Caco-2 (cell line): ENCODE measurements at regions of chr3 and their contacts with region 1.

Region 1: DNA sequence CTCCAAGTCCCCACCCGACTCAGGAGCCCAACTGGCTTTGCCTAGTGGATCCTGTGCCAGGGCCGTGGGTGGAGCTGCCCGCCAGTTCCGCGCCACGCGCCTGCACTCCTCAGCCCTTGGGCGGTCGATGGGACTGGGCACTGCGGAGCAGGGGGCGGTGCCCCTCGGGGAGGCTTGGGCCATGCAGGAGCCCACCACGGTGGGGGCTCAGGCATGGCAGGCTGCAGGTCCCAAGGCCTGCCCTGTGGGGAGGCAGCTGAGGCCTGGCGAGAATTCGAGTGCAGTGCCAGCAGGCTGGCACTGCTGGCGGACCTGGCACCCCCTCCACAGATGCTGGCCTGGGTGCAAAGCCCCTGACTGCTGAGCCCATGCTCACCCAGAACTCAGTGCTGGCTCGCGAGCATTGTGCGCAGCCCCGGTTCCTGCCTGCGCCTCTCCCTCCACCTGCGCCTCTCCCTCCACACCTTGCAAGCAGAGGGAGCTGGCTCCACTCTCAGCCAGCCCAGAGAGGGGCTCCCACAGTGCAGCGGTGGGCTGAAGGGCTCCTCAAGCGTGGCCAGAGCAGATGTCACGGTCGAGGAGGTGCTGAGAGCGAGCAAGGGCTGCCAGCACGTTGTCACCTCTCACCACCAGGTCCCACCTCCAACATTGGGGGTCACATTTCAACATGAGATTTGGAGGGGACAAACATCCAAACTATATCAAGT is 122.7 kb downstream of the USP13 start:
- DNase-seq: no peak
- H3K4me3 ChIP-seq: no peak overlapping the region
- H3K4me3 Mint-ChIP-seq: no peak overlapping the region
- H3K27ac Mint-ChIP-seq: peak overlapping the region; percentile 65
- H3K4me1 ChIP-seq: peaks cover 33% of the 10 kb centered on the region
- H3K4me1 Mint-ChIP-seq: peaks cover 23% of the 10 kb centered on the region
- H3K27me3 ChIP-seq: no peaks in the 10 kb centered on the region
- H3K27me3 Mint-ChIP-seq: no peaks in the 10 kb centered on the region
- CTCF ChIP-seq: no peak

Region 2: GRCh38 chr3:179743913-179744312 is 31.7 kb before region 1 on chr3:
- CTCF ChIA-PET with region 1: no interaction called
- POLR2A ChIA-PET with region 1: no interaction called
- intact Hi-C with region 1: no loop called
- DNase-seq: no peak
- H3K4me3 ChIP-seq: no peak overlapping the region
- H3K4me3 Mint-ChIP-seq: no peak overlapping the region
- H3K27ac Mint-ChIP-seq: no peak overlapping the region
- H3K4me1 ChIP-seq: no peaks in the 10 kb centered on the region
- H3K4me1 Mint-ChIP-seq: no peaks in the 10 kb centered on the region
- H3K27me3 ChIP-seq: no peaks in the 10 kb centered on the region
- H3K27me3 Mint-ChIP-seq: no peaks in the 10 kb centered on the region
- CTCF ChIP-seq: no peak

Region 3: DNA sequence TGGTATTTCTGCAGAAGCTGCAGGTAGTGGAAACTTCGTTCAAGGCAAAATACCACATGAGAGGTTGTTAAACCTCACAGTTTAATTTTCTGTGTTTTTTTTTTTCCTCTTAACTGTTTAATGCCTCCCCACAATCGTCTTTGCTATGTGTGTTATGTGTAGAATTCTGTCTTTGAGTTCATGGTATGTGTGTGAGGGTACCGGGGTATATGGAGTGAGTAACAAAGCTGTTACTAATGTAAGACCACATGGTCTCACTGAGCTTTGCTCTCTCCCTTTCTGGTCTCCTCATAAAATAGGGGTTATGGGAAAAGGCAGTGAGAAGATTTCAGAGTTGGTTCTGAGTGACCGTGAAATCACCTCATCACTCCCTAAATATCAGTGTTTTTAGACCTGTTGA is 20.9 kb after region 1 on chr3:
- CTCF ChIA-PET with region 1: no interaction called
- POLR2A ChIA-PET with region 1: interaction called, 6 read pairs
- intact Hi-C with region 1: loop called (anchors 2 kb)
- DNase-seq: no peak
- H3K4me3 ChIP-seq: no peak overlapping the region
- H3K4me3 Mint-ChIP-seq: no peak overlapping the region
- H3K27ac Mint-ChIP-seq: no peak overlapping the region
- H3K4me1 ChIP-seq: peaks cover 14% of the 10 kb centered on the region
- H3K4me1 Mint-ChIP-seq: peaks cover 9% of the 10 kb centered on the region
- H3K27me3 ChIP-seq: no peaks in the 10 kb centered on the region
- H3K27me3 Mint-ChIP-seq: no peaks in the 10 kb centered on the region
- CTCF ChIP-seq: no peak